ENCODE measurements at regions of chr2 and their contacts with region 1.

Region 1: DNA sequence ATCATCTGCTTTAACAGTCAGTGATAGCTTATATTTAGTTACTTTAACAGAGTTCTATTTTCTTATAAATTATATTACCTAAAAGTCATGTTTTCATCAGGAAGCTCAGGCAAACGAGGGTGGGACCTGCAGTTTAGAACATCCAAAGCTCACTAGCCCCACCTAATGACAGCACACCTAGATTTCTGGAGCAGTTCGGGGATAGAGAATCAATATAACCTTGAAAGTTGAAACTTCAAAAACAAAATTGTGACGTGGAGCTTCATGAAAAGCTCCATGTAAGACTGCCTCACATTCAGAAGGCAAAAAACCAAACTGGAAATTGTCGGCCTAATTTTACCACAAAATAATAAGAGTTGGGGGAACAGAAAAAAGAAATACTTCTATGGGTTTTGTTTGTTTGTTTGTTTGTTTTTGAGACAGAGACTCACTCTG is 185.9 kb upstream of the CCDC150 start:
- DNase-seq: peak; percentile 38
- CTCF ChIP-seq: peak; percentile 75

Region 2: GRCh38 chr2:196076778-196077568 is 376.7 kb before region 1 on chr2:
- CTCF ChIA-PET with region 1: interaction called, 34 read pairs
- POLR2A ChIA-PET with region 1: no interaction called
- DNase-seq: no peak
- CTCF ChIP-seq: no peak

Region 3: DNA sequence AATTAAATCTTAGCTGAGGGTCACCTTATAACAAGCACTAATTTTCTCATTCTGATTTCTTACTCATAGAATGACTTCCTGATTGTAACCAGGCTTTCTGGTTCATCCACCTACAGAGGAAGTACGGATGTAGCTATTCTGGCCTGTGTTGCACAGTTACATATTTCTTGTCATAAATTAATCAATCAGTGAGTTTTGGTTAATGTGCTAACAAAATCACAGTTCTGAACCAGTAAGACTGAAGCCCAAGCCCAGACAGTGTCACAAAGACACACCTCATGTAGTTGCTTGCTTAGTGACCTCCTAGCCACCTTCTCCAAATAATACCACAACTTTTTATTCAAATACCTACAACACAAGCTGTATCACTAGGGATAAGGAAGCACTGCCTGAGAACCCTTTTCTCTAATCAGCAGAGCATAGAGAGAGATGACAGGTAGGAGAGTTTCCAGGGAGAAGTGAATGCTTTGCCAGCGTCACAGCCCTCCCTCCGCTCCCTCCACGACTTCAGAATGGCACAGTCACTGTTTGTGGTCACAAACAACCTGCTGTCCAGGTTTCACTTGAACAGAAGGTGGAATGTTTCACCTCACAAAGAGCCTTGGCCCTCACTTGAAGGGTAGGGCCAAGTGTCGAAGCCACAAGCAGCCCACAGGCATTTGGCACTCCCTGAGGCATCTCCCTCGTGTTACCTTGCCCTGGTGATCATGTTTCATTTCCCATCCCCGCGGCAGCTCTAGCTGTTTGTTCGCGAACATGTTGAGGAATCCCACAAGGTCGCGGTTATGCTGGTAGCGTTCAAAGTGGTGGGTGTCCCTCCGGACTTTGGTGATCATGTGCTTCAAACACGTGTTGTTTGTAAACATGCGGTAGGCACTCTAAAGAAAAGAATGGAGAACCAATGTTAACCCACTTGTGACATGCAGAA is 161.5 kb before region 1 on chr2:
- CTCF ChIA-PET with region 1: interaction called, 14 read pairs
- POLR2A ChIA-PET with region 1: no interaction called
- DNase-seq: no peak
- CTCF ChIP-seq: no peak

Region 4: DNA sequence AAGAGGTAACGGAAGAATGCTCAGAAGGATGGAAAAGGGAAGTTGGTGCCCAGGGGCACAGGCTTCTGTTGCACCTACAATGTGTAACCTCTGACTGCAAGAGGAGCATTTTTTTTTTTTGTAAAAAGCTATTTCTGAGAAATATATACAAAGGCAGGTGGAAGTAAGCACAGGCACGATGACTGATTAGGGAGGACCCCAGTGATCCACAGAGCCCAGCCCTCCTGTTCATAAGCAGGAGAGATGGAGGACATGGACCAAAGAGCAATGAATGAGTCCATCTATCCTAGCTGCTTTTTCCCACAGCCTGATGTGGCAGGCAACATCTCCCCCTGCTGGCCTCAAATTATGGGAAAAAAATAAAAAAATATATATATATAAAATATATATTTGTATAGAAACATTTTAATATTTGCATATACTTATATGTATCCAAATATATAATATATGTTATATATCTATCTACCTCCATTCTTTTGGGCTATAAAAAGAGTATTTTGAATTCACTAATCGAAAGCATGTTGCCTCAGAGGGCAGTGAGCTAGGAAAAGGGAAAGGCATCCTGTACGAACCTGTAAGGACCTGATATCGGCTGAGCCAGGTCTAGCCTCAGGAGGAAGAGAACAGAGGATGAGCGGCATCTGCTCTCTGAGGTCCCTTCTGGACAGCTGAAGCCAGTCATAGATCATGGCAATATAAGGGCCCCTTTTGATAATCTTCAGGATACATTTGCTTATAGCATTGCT is 116.2 kb before region 1 on chr2:
- CTCF ChIA-PET with region 1: interaction called, 50 read pairs
- POLR2A ChIA-PET with region 1: no interaction called
- DNase-seq: no peak
- CTCF ChIP-seq: no peak

Region 5: GRCh38 chr2:196376984-196377877 is 76.4 kb before region 1 on chr2:
- CTCF ChIA-PET with region 1: interaction called, 27 read pairs
- POLR2A ChIA-PET with region 1: no interaction called
- DNase-seq: peak; percentile 21
- CTCF ChIP-seq: no peak

Region 6: DNA sequence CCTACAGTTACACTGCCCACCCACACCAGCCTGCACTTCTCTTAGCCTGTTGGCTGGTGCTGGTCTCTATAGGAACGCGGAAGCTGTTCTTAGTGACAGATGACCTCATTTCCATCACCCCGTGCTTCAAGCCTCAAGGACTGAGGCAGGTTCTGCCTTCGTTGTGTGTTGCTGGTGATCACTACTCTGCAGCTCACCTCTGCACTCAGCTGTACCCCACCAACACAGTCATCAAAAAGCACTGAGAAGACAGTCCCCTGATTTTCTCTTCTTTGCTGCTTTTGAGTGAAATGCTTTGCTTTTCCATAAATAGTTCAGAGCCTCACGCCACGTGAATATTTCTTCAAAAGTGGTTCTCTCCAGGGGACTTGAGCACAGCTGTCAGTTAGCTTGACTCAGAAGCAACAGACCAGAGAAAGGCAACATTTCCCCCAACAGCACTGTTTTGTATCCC is 39.8 kb before region 1 on chr2:
- CTCF ChIA-PET with region 1: interaction called, 29 read pairs
- POLR2A ChIA-PET with region 1: no interaction called
- DNase-seq: peak; percentile 69
- CTCF ChIP-seq: no peak

Region 7: DNA sequence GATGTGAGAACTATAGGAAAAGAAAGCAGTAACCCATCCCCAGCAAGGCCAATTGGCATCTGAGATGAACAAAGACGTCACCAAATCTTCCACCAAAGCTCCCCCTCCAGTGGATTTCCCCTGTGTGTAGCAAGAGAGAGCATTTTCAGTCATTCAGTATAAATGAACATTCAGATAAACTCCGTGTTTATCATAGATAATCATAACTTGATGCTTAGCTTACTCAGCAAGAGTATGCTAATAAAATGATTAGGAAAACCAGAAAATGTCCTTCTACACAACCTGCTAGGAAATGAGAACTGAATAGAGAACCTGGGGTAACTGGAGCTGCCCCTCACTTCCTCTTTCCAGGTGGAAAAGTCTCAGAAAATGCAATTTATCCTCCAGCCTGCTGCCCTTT is 12.1 kb before region 1 on chr2:
- CTCF ChIA-PET with region 1: interaction called, 36 read pairs
- POLR2A ChIA-PET with region 1: no interaction called
- DNase-seq: peak; percentile 42
- CTCF ChIP-seq: no peak

Region 8: GRCh38 chr2:196566961-196567666 is 113.5 kb after region 1 on chr2:
- CTCF ChIA-PET with region 1: no interaction called
- POLR2A ChIA-PET with region 1: no interaction called
- DNase-seq: no peak
- CTCF ChIP-seq: no peak